Esophagus muscularis mucosa (tissue), 4 donors: ENCODE measurements at regions of chr1 and their contacts with region 1.

Region 1: GRCh38 chr1:89454845-89455521 is 69.6 kb upstream of the LRRC8B start:
- DNase-seq: no peak
- H3K4me3 ChIP-seq: no peak overlapping the region
- H3K27ac ChIP-seq: no peak overlapping the region
- H3K4me1 ChIP-seq: no peaks in the 10 kb centered on the region
- H3K27me3 ChIP-seq: no peaks in the 10 kb centered on the region
- CTCF ChIP-seq: peak; percentile 59 to 67 (median 62)
- EP300 ChIP-seq: no peak
- POLR2A ChIP-seq: no peak

Region 2: DNA sequence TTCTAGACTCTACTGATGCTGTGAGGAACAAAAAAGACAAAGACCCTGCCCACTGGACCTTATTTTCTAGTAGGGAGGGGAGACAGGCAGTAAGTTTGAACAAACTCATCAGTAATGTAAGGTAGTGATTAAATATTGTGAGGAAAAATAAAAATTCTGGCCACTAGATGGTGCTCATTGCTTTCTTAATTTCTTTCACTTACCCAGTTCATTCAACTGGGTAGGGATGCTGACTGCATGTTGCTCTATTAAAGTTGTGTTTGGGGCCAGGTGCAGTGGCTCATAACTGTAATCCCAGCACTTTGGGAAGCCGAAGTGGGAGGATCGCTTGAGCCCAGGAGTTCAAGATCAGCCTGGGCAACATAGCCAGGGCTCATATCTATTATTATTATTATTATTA is 456.3 kb before region 1 on chr1:
- intact Hi-C with region 1: loop called (anchors 2 kb)
- DNase-seq: no peak
- H3K4me3 ChIP-seq: no peak overlapping the region
- H3K27ac ChIP-seq: no peak overlapping the region
- H3K4me1 ChIP-seq: peaks cover 0 to 10% (median 7%) of the 10 kb centered on the region in 4 donors
- H3K27me3 ChIP-seq: no peaks in the 10 kb centered on the region
- CTCF ChIP-seq: peak; percentile 54 to 64 (median 56)
- EP300 ChIP-seq: no peak
- POLR2A ChIP-seq: no peak

Region 3: GRCh38 chr1:89085781-89086180 is 369.2 kb before region 1 on chr1:
- intact Hi-C with region 1: loop called (anchors 10 kb)
- DNase-seq: no peak
- H3K4me3 ChIP-seq: no peak overlapping the region
- H3K27ac ChIP-seq: no peak overlapping the region
- H3K4me1 ChIP-seq: no peaks in the 10 kb centered on the region
- H3K27me3 ChIP-seq: no peaks in the 10 kb centered on the region
- CTCF ChIP-seq: peak; percentile 61 to 74 (median 67)
- EP300 ChIP-seq: no peak
- POLR2A ChIP-seq: no peak